ENCODE measurements at regions of chr19 and their contacts with region 1.

Region 1: GRCh38 chr19:30669329-30670010 is 297.3 kb downstream of the ZNF536 start:
- DNase-seq: peak; percentile 81
- H3K4me3 ChIP-seq: peak overlapping the region in 1 of 2 donors; percentile 13
- H3K27ac ChIP-seq: peak overlapping the region; percentile 47 to 68
- H3K4me1 ChIP-seq: no peaks in the 10 kb centered on the region
- H3K27me3 ChIP-seq: no peaks in the 10 kb centered on the region
- CTCF ChIP-seq: peak; percentile 68 to 88 (median 86)
- POLR2A ChIP-seq: no peak

Region 2: GRCh38 chr19:32224371-32225244 is 1555.1 kb after region 1 on chr19:
- intact Hi-C with region 1: loop called (anchors 10 kb)
- DNase-seq: peak; percentile 40 to 70
- H3K4me3 ChIP-seq: no peak overlapping the region
- H3K27ac ChIP-seq: no peak overlapping the region
- H3K4me1 ChIP-seq: no peaks in the 10 kb centered on the region
- H3K27me3 ChIP-seq: no peaks in the 10 kb centered on the region
- CTCF ChIP-seq: peak; percentile 96 to 100 (median 98)
- POLR2A ChIP-seq: no peak

Measured in uterus (tissue), 4 donors.